ENCODE measurements at regions of chr7 and their contacts with region 1.

Region 1: DNA sequence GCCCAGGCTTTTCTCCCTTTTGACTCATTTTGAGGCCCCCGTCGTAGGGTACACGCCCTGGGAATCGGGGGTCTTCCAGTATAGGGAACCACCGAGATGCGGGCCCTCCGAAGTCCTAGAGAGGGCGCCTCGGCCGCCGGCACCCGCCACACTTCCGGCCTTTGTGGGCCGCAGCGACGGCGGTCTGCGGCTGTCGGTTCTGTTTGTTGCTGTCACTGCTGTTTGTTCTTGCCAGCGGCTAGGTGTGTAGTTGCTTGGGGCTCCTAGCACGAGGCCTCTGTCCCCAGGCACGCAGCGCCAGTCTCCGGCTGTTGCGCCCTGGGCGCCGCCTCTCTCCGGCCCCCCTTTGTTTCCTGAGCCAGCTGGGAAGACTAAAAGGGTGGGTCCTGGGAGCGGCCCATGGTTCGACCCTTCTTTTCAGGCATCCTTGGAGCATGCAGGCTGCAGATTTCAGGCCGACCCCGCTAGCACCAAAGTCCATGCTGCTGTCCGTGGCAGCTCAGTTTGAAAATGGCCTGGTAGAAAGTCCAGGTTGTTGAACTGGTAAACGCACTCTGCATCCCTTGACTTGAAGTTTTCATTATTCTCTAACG is 17.8 kb upstream of the ZKSCAN1 start:
- DNase-seq: no peak
- ATAC-seq: peak; percentile 39; the same call in 1 of the 2 replicates
- H3K4me3 ChIP-seq: peak overlapping the region; percentile 23 to 31
- H3K27ac ChIP-seq: peak overlapping the region; percentile 18; the same call in 1 of the 2 replicates
- H3K4me1 ChIP-seq: peaks cover 13% of the 10 kb centered on the region
- H3K27me3 ChIP-seq: no peaks in the 10 kb centered on the region
- CTCF ChIP-seq: no peak

Region 2: DNA sequence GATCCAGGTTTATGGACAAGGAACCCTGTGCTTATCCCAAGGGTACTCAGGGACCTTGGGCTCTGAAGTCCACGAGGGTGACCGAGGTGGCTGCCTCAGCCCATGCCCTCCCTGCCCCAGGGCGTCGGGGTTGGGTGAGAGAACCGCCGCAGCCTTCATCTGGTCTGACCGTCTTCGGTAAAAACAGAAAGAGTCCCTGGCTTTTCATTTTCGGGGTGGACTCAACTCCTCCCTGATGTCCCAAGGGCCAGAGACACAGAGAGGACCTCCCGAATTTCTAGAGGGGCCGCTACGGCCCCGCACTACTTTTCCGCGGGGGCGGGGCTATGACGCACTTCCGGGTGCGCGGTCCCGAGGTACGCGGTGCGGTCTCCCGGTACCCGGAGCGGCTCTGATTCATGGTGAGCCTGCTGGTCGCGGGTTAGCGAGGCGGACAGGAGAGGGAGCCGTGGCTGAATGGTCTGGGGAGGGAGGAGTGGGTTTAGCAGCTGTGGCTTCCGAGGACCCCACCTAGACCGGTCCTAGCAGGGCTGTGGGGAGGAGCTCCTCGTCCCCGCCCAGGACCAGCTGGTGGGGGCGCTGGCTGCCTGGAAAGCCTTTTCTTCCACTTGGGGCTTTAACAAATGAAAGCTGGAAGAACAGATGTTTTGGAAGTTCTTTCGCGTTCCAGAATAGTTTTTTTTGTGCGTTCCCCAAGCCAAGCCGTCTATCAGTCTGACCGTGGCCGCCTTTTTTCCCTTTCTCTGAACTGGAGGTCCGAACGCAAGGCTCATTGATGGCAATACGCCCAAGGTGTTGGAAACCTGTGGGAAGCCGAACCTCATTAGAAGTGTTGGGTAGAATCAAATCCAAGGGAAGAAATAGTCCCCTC is 52.0 kb after region 1 on chr7 and contains the start of gene ZSCAN21:
- CTCF ChIA-PET with region 1: interaction called, 14 read pairs
- POLR2A ChIA-PET with region 1: interaction called, 3 read pairs
- in situ Hi-C with region 1: no loop called
- intact Hi-C with region 1: loop called (anchors 1 kb)
- DNase-seq: peak; percentile 69
- ATAC-seq: peak; percentile 98
- H3K4me3 ChIP-seq: peak within 1 kb of the TSS; percentile 92 to 99
- H3K27ac ChIP-seq: peak within 1 kb of the TSS; percentile 94
- H3K4me1 ChIP-seq: peaks cover 4% of the 10 kb centered on the region
- H3K27me3 ChIP-seq: no peaks in the 10 kb centered on the region
- CTCF ChIP-seq: peak; percentile 49; the same call in 1 of the 2 replicates
- total RNA-seq, gene ZSCAN21: 13.4 TPM

Region 3: DNA sequence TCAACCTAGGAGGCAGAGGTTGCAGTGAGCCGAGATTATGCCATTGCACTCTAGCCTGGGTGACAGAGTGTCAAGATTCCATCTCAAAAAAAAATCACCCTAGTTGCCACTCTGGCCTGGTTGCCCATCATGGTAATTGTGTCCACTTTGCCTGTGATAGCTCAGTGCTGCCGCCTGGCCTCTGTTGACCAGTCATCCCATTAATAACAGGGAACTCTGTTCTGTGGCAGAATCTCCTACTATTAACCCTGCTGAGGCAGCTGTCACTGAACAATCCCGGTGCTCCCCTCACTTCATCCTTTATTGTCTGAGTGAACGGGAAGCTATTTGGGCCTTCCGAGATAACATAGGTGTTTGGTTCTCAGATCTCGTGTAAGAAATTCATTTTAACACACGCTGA is 69.3 kb after region 1 on chr7:
- CTCF ChIA-PET with region 1: interaction called, 9 read pairs
- POLR2A ChIA-PET with region 1: interaction called, 14 read pairs
- in situ Hi-C with region 1: no loop called
- intact Hi-C with region 1: no loop called
- DNase-seq: no peak
- ATAC-seq: peak; percentile 63; the same call in 1 of the 2 replicates
- H3K4me3 ChIP-seq: no peak overlapping the region
- H3K27ac ChIP-seq: no peak overlapping the region
- H3K4me1 ChIP-seq: no peaks in the 10 kb centered on the region; the same call in 1 of the 2 replicates
- H3K27me3 ChIP-seq: no peaks in the 10 kb centered on the region
- CTCF ChIP-seq: no peak

Region 4: DNA sequence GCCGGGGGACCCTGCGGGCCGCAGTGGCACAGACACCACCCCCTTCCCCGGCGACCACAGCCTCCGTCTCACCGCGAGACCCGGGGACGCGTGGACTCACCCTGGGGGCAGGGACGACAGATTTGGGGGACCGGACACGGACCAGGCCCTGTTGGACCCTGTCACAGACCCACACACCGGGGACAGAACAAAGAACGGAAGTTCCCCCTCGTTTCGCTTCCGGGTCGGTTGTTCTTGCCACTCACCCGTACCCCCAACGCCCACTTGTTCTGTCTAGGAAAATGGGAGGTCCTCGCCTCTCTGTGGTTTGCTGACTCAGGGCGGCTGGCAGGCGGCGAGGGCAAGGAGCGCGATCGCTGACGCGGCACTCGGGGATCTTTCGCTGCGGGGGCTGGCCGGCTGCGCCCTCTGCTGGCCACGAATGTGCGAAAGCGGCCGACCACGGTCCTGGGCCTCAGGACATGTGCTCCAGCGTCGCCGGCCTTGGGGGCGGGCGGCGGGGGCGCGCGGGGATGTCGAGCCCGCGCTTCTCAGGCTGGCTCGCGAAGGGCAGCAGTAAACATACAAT is 84.0 kb after region 1 on chr7 and contains the start of gene ZNF3:
- CTCF ChIA-PET with region 1: interaction called, 3 read pairs
- POLR2A ChIA-PET with region 1: no interaction called
- in situ Hi-C with region 1: no loop called
- intact Hi-C with region 1: loop called (anchors 10 kb)
- DNase-seq: peak; percentile 100
- ATAC-seq: peak; percentile 97
- H3K4me3 ChIP-seq: peak within 1 kb of the TSS; percentile 76 to 99
- H3K27ac ChIP-seq: peak within 1 kb of the TSS; percentile 91
- H3K4me1 ChIP-seq: peaks cover 9% of the 10 kb centered on the region
- H3K27me3 ChIP-seq: no peaks in the 10 kb centered on the region
- CTCF ChIP-seq: peak; percentile 98
- total RNA-seq, gene ZNF3: 32.9 TPM

Region 5: DNA sequence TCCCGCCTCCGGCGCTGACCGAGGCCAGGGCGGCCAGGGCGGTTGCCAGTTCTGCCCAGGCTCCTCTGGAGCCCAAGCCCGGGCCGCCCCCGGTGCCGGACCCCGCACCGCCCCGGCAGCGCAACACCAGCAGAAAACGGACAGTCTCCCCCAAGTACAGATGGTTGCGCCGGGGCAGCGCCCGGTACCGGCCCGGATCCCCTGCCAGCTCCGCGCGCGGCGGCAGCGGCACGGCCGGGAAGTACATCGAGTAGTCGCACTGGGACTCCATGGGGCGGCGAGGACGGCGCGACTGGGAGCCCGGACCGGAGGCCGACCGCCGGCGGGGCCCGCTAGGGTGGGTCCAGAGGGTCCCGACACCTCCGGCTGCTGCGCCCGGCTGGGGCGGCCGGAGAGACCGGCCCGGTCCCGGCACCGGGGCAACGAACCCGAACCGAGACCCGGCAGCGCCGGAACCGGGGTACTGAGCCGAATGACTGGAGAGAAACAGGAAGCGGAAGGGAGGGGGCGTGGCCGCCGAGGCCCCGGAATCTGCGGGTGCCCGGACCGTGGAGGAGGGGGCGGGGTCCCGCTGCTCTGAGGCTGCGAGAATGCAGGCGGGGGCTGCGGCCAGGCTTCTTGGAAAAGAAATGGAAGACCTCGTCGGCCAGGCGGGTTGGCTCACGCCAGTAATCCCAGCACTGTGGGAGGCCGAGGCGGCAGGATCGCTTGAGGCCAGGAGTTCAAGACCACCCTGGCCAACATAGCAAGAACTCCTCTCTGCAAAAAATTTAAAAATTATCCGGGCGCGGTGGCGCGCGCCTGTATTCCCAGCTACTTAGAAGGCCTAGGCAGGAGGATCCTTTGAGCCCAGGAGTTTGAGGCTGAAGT is 160.8 kb after region 1 on chr7 and contains the start of gene TRAPPC14:
- CTCF ChIA-PET with region 1: no interaction called
- POLR2A ChIA-PET with region 1: no interaction called
- in situ Hi-C with region 1: no loop called
- intact Hi-C with region 1: no loop called
- DNase-seq: no peak
- ATAC-seq: peak; percentile 83
- H3K4me3 ChIP-seq: peak within 1 kb of the TSS; percentile 78 to 91
- H3K27ac ChIP-seq: peak within 1 kb of the TSS; percentile 81
- H3K4me1 ChIP-seq: peaks cover 38% of the 10 kb centered on the region
- H3K27me3 ChIP-seq: no peaks in the 10 kb centered on the region
- CTCF ChIP-seq: no peak
- total RNA-seq, gene TRAPPC14: 33.2 TPM